Activated CD4-positive, alpha-beta T cell treated with anti-CD3 and anti-CD28 coated beads for 36 hours (primary cell): ENCODE measurements at regions of chr17 and their contacts with region 1.

Region 1: GRCh38 chr17:76671123-76671911 is 27.8 kb upstream of the ST6GALNAC1 start:
- DNase-seq: peak; percentile 100
- ATAC-seq: peak; percentile 100
- H3K4me3 Mint-ChIP-seq: peak overlapping the region; percentile 87
- H3K27ac Mint-ChIP-seq: peak overlapping the region; percentile 95
- H3K4me1 Mint-ChIP-seq: peaks cover 25% of the 10 kb centered on the region
- H3K27me3 Mint-ChIP-seq: no peaks in the 10 kb centered on the region

Region 2: DNA sequence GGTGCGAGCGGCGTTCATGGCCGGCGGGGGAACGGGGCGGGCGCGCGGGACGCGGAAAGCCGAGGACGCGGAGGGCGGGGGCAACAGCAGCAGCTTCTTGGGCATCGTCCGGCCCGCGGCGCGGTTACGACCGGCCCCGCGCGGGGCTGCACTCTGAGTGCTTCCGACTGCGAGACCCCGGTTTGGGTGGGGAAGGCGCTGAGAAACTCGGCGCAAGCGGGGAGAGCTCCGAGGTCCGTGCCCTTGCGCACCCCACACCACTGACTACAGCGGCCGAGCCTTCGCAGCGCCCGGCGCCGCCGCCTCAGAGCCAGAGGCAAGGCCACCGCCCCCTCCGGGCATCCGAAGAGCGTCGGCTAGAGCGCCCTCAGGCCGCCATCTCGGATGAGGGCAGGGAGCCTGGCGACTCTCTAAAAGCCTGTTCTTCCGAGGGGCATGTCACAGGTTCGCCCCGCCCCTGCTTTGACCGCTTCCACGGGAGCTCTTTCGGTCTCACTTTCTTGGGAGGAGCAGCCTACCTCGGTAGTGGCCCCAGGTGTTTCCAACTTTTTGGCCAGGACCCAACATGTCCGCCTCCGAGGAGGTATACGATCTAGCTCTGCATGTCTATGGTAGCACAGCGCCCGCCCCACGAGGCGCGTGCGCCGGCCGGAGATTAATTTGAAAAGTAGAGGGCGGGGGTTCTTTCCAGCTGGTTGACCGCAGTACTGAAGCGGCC is 317.6 kb before region 1 on chr17 and contains the start of gene PRPSAP1:
- CTCF ChIA-PET with region 1: no interaction called
- POLR2A ChIA-PET with region 1: no interaction called
- intact Hi-C with region 1: loop called in 1 of 2 experiments (anchors 2 kb)
- DNase-seq: peak; percentile 88
- ATAC-seq: peak; percentile 97
- H3K4me3 Mint-ChIP-seq: peak within 1 kb of the TSS; percentile 78
- H3K27ac Mint-ChIP-seq: peak within 1 kb of the TSS; percentile 96
- H3K4me1 Mint-ChIP-seq: peaks cover 18% of the 10 kb centered on the region
- H3K27me3 Mint-ChIP-seq: no peaks in the 10 kb centered on the region
- total RNA-seq, gene PRPSAP1: 26.7 to 34.9 TPM

Region 3: GRCh38 chr17:76515274-76515949 is 155.9 kb before region 1 on chr17:
- CTCF ChIA-PET with region 1: no interaction called
- POLR2A ChIA-PET with region 1: no interaction called
- intact Hi-C with region 1: loop called in 1 of 2 experiments (anchors 5 kb)
- DNase-seq: peak; percentile 86
- ATAC-seq: peak; percentile 90
- H3K4me3 Mint-ChIP-seq: peak overlapping the region; percentile 47
- H3K27ac Mint-ChIP-seq: peak overlapping the region; percentile 94
- H3K4me1 Mint-ChIP-seq: peaks cover 32% of the 10 kb centered on the region
- H3K27me3 Mint-ChIP-seq: no peaks in the 10 kb centered on the region

Region 4: GRCh38 chr17:76578344-76578979 is 92.9 kb before region 1 on chr17:
- CTCF ChIA-PET with region 1: no interaction called
- POLR2A ChIA-PET with region 1: no interaction called
- intact Hi-C with region 1: no loop called
- DNase-seq: no peak
- ATAC-seq: no peak
- H3K4me3 Mint-ChIP-seq: no peak overlapping the region
- H3K27ac Mint-ChIP-seq: no peak overlapping the region
- H3K4me1 Mint-ChIP-seq: peaks cover 6% of the 10 kb centered on the region
- H3K27me3 Mint-ChIP-seq: peaks cover 2% of the 10 kb centered on the region

Region 5: DNA sequence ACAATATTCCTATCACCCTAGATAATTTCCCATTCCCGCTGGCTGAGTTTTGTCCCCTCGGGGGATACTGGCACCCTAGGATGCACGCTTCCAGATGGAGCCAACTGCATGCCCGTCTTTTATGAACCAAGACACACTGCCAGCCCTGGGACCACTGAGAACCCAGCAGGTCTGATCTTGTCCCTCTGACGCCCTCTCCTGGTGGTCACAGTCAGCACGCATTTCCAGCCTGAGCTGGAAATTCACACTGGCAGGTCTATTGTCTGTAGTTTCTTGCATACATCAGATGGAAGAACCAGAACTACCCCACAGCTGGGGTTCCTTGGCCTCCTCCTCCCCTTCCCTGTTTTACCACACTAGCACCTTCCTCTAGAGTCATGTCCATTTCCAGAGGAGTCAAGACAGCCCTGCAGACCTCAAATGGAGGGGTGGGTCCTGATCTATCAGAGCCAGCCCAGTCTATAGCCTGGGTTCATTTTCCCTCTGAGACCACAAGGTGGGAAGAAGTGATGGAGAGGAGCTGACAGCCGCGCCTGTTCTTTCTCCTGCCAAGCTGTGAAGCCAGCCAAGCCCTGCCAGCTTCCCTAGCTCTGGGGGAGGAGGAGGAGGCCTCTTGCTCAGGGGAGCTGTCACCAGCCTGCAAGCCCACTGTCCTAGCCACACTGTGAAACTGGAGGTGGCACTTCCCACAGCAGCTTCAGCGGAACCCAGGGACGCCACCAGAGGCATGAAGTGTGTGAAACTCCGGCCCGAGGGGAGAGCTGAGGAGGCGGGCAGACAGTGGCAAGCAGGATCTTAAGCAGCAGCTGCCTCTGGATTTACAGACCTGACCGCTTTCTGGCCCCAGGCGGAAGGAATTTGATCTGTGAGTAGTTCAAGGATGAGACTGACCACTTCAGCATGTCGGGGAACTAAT is 10.2 kb after region 1 on chr17:
- CTCF ChIA-PET with region 1: interaction called, 13 read pairs
- POLR2A ChIA-PET with region 1: interaction called, 3 read pairs
- intact Hi-C with region 1: no loop called
- DNase-seq: peak; percentile 83
- ATAC-seq: peak; percentile 89
- H3K4me3 Mint-ChIP-seq: no peak overlapping the region
- H3K27ac Mint-ChIP-seq: no peak overlapping the region
- H3K4me1 Mint-ChIP-seq: peaks cover 1% of the 10 kb centered on the region
- H3K27me3 Mint-ChIP-seq: no peaks in the 10 kb centered on the region

Region 6: GRCh38 chr17:76690596-76691280 is 19.4 kb after region 1 on chr17:
- CTCF ChIA-PET with region 1: no interaction called
- POLR2A ChIA-PET with region 1: interaction called, 12 read pairs
- intact Hi-C with region 1: no loop called
- DNase-seq: no peak
- ATAC-seq: no peak
- H3K4me3 Mint-ChIP-seq: no peak overlapping the region
- H3K27ac Mint-ChIP-seq: no peak overlapping the region
- H3K4me1 Mint-ChIP-seq: peaks cover 2% of the 10 kb centered on the region
- H3K27me3 Mint-ChIP-seq: no peaks in the 10 kb centered on the region

Region 7: DNA sequence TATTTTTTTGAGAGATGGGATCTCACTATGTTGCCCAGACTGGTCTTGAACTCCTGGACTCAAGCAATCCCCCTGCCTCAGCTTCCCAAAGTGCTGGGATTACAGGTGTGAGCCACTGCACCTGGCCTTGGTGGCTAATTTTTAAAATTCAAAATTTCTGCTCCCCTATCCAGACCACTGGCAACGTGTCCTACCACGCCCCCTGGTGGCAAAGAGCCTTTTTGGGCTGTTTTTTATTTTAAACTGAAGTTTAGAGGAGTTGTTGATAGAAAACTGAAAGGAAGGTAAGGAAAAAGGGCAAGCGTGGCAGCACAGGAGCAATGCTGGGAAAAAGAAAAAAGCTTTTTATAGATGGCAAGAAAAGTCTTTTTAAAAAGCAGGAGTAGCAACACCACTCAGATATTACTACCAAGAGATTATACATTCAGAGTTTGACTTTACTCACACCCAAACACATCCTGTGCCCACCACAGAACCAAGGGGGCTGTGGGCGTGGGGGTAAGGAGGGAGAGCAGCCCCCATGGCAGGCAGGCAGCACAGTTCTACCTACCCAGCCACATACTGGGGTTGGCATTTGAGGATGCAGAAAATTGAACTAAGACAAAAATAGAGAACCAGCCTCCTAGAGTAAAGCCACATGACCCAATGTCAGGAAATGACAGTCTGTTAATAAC is 43.6 kb after region 1 on chr17:
- CTCF ChIA-PET with region 1: interaction called, 8 read pairs
- POLR2A ChIA-PET with region 1: no interaction called
- intact Hi-C with region 1: loop called in 1 of 2 experiments (anchors 2 kb)
- DNase-seq: peak; percentile 87
- ATAC-seq: no peak
- H3K4me3 Mint-ChIP-seq: no peak overlapping the region
- H3K27ac Mint-ChIP-seq: peak overlapping the region; percentile 68
- H3K4me1 Mint-ChIP-seq: peaks cover 38% of the 10 kb centered on the region
- H3K27me3 Mint-ChIP-seq: no peaks in the 10 kb centered on the region

Region 8: DNA sequence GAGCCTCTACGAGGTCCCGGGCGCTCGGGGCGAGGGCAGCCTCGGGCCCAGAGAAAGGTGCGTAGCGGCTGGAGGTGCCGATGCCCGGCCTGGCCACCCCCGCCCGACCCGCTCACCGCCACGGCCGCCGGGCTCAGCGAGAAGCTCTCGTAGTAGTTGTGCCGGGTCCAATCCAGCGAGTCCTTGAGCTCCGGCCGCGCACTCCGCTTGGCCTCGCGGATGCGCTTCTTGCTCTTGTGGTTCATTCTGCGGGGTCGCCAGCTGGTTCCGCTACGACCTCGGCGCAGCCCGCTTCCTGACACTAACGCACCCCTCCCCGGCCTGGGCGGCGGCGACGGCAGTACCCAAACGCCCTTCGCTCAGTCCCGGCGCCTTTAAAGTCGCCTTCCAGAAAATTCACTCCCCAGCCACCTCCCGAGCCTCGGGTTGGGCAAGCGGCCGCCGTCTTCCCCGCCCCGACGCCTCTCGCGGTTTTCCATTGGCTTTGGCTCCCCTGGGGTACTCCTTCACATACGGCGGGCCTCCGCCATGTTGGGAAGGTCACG is 55.0 kb after region 1 on chr17 and contains the start of gene JMJD6:
- CTCF ChIA-PET with region 1: interaction called, 3 read pairs
- POLR2A ChIA-PET with region 1: interaction called, 4 read pairs
- intact Hi-C with region 1: loop called (anchors 1 kb)
- DNase-seq: peak; percentile 97
- ATAC-seq: peak; percentile 87
- H3K4me3 Mint-ChIP-seq: peak within 1 kb of the TSS; percentile 97
- H3K27ac Mint-ChIP-seq: peak within 1 kb of the TSS; percentile 98
- H3K4me1 Mint-ChIP-seq: peaks cover 54% of the 10 kb centered on the region
- H3K27me3 Mint-ChIP-seq: no peaks in the 10 kb centered on the region
- total RNA-seq, gene JMJD6: 51.3 to 65.5 TPM